Calu3 (cell line): ENCODE measurements at regions of chr3 and their contacts with region 1.

Region 1: DNA sequence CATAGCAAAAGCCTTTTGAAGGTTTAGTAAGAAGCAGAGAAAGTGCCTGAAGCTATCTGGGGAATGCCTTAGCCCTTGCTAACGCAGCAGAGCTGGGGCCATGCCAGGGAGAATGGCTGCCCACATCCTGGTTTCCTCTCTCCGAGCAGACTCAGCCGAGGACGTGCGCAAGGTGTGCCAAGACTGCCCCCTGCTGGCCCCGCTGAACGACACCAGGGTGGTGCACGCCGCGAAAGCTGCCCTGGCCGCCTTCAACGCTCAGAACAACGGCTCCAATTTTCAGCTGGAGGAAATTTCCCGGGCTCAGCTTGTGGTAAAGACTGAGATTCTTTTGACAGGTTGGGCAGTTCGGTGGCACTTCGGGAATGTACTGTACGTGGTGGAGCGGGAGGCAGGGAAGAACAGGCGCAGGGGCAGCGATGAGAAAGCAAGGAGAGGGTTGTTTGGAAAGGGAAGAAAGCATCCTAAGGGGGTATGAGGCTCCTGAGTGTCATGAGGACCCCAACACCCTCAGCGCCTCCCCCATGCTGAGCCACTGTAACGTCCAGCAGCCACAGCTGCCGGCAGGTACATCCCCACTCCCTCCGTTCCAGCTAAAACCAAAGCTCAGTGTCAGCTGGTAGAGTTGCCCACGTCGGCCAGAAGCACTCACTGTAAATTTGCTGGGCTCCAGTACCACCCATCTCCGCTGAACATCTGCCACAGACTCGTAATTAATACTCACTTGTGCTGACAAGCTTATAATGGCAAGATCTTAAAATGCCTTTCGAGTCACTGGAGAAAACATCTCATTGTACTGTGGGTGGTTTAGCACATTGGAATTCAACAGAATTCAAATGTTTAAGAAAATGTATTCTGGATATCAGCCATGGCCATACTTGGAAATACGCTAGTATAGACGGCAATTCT is 4.4 kb downstream of the AHSG start:
- DNase-seq: peak; percentile 98
- H3K4me3 Mint-ChIP-seq: peak overlapping the region; percentile 64
- H3K27ac Mint-ChIP-seq: peak overlapping the region; percentile 78
- H3K4me1 Mint-ChIP-seq: peaks cover 27% of the 10 kb centered on the region
- H3K27me3 Mint-ChIP-seq: no peaks in the 10 kb centered on the region
- CTCF ChIP-seq: peak; percentile 98

Region 2: DNA sequence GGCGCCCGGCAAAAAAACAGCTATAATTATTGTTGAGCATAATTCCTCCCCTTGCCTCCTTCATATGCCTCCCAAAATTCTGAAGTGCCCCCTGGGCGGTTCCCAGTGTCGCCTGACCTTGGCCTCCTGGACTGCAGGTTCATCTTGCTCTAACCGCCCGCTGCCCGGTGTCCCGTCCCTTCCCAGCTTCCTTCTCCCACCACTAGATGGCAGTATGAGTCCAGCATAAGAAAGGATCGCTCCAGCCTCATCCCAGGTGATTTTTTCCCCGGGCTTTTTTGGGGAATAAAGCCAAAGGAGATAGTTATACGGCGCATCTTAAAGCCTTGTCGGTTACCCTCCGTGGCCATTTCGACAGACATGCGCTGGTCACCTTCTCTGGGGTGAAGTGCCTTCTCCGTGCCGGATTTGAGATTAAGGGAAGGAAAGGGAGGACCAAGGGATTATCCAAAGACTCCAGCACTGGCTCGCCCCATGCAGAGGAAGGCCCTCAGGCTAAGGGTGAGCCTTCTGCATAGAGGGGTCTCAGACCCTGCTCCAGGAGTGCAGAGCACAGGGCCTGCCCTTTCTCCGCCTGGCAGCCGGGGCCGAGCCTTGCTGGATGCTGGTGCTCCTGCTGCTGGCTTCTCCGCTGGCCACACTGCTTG is 633.7 kb before region 1 on chr3:
- CTCF ChIA-PET with region 1: no interaction called
- intact Hi-C with region 1: loop called (anchors 10 kb)
- DNase-seq: peak; percentile 87
- H3K4me3 Mint-ChIP-seq: no peak overlapping the region
- H3K27ac Mint-ChIP-seq: no peak overlapping the region
- H3K4me1 Mint-ChIP-seq: peaks cover 17% of the 10 kb centered on the region
- H3K27me3 Mint-ChIP-seq: peaks cover 16% of the 10 kb centered on the region
- CTCF ChIP-seq: peak; percentile 98

Region 3: DNA sequence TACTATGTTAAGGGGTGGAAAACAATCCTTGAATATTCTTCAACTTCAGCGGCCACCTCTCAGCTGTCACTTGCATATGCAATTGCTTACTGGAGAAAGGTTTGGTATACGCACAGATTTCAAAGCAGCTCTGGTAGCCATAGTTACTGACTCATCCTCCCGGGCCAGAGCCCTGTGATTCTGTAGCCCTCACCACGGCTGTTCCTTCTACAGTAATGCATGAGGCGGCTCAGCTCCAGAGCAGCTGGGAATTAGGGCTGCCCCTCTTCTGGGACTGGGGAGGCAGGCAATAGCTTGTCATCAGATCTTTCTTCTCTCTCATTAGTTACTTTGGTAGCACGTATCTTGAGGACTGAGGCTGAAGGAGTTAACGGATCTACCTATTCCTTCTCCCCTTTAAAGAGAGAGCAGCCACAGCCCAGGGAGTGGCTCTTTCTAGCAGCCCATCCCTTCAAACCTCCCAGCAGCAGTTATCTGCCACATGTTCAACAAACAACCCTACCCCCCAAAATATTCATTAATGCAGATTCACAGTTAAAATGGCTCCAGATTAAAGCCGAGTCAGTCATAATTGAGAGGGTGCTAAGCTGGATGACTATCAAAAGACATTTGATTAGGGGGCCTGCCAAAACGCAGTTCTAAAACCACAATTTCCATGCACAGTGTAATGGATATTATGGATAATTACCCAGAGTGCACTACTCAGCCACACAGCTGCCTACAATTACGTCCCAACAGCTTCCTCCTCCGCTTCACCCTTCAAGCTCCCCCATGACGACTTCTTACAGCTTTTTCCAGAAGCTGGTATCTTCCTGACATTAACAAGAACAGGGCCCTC is 563.1 kb before region 1 on chr3:
- CTCF ChIA-PET with region 1: no interaction called
- intact Hi-C with region 1: no loop called
- DNase-seq: no peak
- H3K4me3 Mint-ChIP-seq: no peak overlapping the region
- H3K27ac Mint-ChIP-seq: no peak overlapping the region
- H3K4me1 Mint-ChIP-seq: no peaks in the 10 kb centered on the region
- H3K27me3 Mint-ChIP-seq: no peaks in the 10 kb centered on the region
- CTCF ChIP-seq: no peak

Region 4: DNA sequence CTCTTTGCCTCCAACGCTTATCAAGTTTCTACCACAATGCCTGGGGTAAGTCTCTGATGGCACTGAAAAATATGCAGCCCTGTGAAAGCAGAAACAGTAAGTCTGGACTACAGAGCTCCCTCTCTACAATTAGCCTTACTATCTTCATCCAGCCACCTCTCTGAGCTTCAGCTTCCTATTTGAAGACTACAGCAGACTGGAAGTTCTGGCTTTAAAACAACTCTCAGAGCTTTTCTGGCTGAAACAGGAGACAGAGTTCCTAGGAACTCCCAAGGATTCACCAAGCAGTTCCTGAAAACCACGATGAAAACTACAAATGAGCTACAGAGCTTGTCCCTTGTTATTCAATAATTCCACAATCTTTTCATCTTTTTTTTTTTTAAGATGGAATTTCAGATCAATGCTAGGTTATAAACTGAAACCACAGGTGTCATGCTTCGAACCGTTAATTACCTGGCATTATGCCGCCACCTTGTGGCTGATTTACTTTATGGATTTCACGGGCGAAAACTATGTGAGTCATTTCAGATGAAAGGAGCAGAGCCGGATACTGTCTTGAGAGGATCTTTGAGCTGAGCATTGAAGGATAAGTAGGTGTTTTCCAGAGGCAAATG is 77.0 kb before region 1 on chr3:
- CTCF ChIA-PET with region 1: interaction called, 13 read pairs
- intact Hi-C with region 1: no loop called
- DNase-seq: peak; percentile 89
- H3K4me3 Mint-ChIP-seq: no peak overlapping the region
- H3K27ac Mint-ChIP-seq: no peak overlapping the region
- H3K4me1 Mint-ChIP-seq: peaks cover 12% of the 10 kb centered on the region
- H3K27me3 Mint-ChIP-seq: no peaks in the 10 kb centered on the region
- CTCF ChIP-seq: peak; percentile 87

Region 5: DNA sequence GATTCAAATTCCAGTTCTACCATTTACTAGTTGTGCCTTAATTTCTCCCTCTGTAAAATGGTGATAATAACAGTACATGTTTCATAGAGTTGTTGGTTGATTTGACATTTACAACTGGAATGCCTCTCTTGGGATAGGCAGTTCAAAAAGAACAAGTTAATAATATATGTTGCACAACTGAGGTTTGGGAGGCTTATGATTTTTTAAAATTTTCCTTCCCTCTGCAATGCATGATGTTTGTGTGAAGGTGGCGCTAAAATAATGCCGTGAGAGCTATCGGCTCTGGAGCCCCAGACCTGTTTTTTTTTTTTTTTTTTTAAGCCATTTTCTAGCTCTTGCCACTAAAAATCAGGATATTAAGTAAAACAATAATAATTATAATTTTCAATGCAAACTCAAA is 28.2 kb before region 1 on chr3:
- CTCF ChIA-PET with region 1: interaction called, 61 read pairs
- intact Hi-C with region 1: no loop called
- DNase-seq: peak; percentile 44
- H3K4me3 Mint-ChIP-seq: no peak overlapping the region
- H3K27ac Mint-ChIP-seq: peak overlapping the region; percentile 64
- H3K4me1 Mint-ChIP-seq: peaks cover 45% of the 10 kb centered on the region
- H3K27me3 Mint-ChIP-seq: no peaks in the 10 kb centered on the region
- CTCF ChIP-seq: peak; percentile 63

Region 6: GRCh38 chr3:186669378-186670084 is 52.2 kb after region 1 on chr3:
- CTCF ChIA-PET with region 1: no interaction called
- intact Hi-C with region 1: no loop called
- DNase-seq: peak; percentile 41
- H3K4me3 Mint-ChIP-seq: no peak overlapping the region
- H3K27ac Mint-ChIP-seq: peak overlapping the region; percentile 83
- H3K4me1 Mint-ChIP-seq: peaks cover 31% of the 10 kb centered on the region
- H3K27me3 Mint-ChIP-seq: no peaks in the 10 kb centered on the region
- CTCF ChIP-seq: no peak

Region 7: GRCh38 chr3:186754006-186754405 is 136.7 kb after region 1 on chr3:
- CTCF ChIA-PET with region 1: interaction called, 24 read pairs
- intact Hi-C with region 1: loop called (anchors 1 kb)
- DNase-seq: no peak
- H3K4me3 Mint-ChIP-seq: peak overlapping the region; percentile 69
- H3K27ac Mint-ChIP-seq: peak overlapping the region; percentile 99
- H3K4me1 Mint-ChIP-seq: peaks cover 37% of the 10 kb centered on the region
- H3K27me3 Mint-ChIP-seq: no peaks in the 10 kb centered on the region
- CTCF ChIP-seq: no peak

Region 8: GRCh38 chr3:186821429-186822367 is 204.4 kb after region 1 on chr3:
- CTCF ChIA-PET with region 1: interaction called, 14 read pairs
- intact Hi-C with region 1: loop called (anchors 1 kb)
- DNase-seq: peak; percentile 60
- H3K4me3 Mint-ChIP-seq: no peak overlapping the region
- H3K27ac Mint-ChIP-seq: no peak overlapping the region
- H3K4me1 Mint-ChIP-seq: peaks cover 30% of the 10 kb centered on the region
- H3K27me3 Mint-ChIP-seq: peaks cover 34% of the 10 kb centered on the region
- CTCF ChIP-seq: peak; percentile 57